BJ (cell line): ENCODE measurements at regions of chr18 and their contacts with region 1.

Region 1: DNA sequence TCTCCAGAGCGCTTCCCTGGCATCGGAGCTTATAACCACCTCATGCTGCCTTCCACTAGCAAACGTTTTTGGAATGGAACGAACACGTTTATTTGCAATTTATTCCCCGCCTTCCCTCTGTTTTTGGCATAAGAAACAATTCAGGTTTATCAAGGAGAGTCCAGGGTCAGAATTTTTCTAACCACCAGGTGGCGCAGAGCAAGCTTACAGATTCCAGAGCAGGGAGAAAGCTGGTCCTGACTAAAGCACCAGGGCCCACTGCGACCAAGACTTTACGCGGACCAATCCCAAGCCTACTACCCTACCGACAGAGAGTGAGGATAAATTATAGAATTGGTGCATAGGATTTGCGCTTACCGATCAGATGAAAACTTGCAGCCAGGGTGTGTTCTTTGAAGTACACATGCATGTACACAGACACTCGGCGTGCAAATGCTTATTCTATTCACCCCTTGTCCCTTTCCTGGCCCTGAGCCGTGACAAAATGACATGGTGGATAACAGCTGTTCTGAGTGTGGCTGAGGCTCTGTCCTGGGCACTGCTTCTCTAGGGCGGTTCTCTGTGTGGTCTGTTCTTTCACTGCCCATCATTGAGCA is 34.7 kb downstream of the NAPG start:
- DNase-seq: no peak
- H3K4me3 ChIP-seq: no peak overlapping the region
- H3K27me3 ChIP-seq: no peaks in the 10 kb centered on the region
- CTCF ChIP-seq: peak; percentile 81

Region 2: GRCh38 chr18:10546557-10547300 is 13.8 kb before region 1 on chr18:
- CTCF ChIA-PET with region 1: interaction called, 18 read pairs
- POLR2A ChIA-PET with region 1: no interaction called
- DNase-seq: no peak
- H3K4me3 ChIP-seq: no peak overlapping the region
- H3K27me3 ChIP-seq: no peaks in the 10 kb centered on the region
- CTCF ChIP-seq: no peak

Region 3: DNA sequence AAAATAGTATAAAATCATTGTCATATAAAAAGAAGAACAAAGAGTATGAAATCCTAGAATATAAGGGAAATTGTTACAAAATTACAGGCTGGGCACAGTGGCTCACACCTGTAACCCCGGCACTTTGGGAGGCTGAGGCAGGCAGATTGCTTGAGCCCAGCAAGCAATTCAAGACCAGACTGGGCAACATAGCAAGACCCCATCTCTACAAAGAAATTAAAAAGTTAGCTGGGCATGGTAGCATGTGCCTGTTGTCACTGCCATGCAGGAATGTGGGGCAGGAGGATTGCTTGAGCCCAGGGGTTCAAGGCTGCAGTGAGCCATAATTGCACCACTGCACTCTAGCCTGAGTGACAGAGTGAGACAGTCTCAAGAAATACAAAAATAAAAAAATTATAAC is 10.1 kb after region 1 on chr18:
- CTCF ChIA-PET with region 1: interaction called, 11 read pairs
- POLR2A ChIA-PET with region 1: no interaction called
- DNase-seq: no peak
- H3K4me3 ChIP-seq: no peak overlapping the region
- H3K27me3 ChIP-seq: no peaks in the 10 kb centered on the region
- CTCF ChIP-seq: no peak

Region 4: DNA sequence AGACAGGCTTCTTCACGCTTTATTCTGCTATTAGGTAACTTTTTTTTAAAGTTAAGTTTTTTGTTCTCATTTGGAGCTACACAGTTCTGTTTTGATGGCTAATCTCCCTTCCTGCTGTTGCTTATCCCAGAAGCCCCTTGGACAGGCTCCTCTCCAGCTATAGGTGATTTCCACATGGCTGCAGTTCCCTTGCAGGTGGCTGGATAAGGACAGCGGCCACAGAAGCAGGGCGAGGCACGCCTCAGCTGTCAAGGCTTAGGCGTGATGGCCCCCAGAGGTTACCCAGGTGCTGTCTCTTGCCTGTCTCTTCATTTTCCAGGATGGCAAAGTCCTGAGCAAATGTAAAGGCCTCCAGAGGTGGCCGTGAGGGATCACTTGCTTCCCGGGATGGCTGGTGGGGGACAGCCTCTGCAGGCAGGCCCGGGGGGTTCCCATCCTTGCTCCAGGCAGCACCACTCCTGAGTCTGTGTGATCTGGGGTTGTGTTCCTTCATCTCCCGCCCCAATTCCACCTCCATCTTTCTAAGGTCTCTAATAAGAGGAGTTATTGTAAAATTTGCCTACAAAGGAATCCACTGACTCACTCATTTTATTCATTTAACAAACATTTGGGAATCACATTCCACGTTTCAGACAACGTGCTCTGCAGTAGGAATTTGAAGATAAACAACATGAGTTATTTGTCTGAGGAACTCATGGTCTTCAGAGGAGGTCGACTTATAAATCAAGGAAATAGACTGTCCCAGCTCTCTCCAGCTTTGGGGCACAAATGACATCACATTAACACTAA is 18.7 kb after region 1 on chr18:
- CTCF ChIA-PET with region 1: interaction called, 11 read pairs
- POLR2A ChIA-PET with region 1: no interaction called
- DNase-seq: peak; percentile 63
- H3K4me3 ChIP-seq: no peak overlapping the region
- H3K27me3 ChIP-seq: no peaks in the 10 kb centered on the region
- CTCF ChIP-seq: no peak

Region 5: DNA sequence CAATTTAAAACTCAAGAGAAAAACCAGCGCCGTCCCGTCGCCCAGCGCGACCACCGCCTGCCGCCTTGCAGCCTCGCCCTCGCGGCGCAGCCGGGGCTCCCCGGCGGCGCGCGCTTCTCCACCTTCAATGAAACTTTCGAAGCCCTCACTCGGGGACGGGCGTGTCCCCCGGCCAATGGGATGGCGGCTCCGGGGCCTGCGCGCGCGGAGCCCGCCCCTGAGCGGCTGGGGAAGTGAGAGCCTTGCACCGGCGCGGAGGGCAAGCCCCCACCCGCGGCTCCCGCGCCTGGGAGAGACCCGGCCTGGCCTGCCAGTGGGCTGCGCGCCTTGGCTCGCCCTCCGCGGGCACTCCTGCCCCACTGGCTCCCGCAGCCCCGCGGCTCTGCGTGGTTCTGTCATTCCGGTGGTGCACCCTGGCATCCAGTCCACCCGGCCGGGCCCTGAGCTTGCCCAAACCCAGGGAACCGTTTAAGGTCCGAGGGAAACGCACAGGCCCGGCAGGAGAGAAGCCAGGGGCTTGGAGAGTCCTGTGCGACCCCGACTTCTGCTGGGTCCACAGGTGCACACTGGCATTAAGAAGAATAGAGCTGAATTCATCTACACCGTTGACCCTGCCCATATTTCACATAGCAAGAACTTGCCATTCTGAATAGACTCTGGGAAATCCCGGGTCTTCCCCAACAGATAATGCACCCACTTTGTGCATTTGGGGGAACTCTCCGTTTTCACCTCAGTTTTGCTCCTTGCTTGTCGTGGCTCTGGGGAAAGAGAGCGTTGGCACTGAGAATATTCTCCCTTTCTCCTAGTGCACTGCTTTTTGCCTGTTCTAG is 589.1 kb after region 1 on chr18 and contains the start of gene PIEZO2:
- CTCF ChIA-PET with region 1: interaction called, 38 read pairs
- POLR2A ChIA-PET with region 1: no interaction called
- DNase-seq: no peak
- H3K4me3 ChIP-seq: peak within 1 kb of the TSS; percentile 41
- H3K27me3 ChIP-seq: peaks cover 33% of the 10 kb centered on the region
- CTCF ChIP-seq: no peak
- polyA plus RNA-seq, gene PIEZO2: 4.3 and 4.6 TPM in 2 replicates